ENCODE measurements at regions of chr4 and their contacts with region 1.

Region 1: DNA sequence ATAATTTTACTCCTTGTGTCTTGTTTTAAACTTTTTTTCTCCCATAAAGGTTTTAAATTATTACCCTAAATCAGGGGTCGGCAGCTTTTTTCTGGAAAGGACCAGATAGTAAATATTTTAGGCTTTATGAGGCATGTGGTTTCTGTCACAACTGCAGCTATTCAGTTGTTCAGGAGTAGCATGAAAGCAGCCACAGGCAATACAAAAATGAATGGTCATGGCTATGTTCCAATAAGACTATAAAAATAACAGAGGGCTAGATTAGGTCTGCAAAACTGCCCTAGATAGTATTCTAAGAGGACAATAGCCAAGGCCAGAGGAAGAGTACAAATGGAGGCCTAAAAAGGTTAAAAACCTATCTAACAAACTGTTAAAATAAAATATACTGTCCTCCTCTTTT is 24.6 kb downstream of the HERC5 start:
- DNase-seq: no peak
- ATAC-seq: peak; percentile 76

Region 2: DNA sequence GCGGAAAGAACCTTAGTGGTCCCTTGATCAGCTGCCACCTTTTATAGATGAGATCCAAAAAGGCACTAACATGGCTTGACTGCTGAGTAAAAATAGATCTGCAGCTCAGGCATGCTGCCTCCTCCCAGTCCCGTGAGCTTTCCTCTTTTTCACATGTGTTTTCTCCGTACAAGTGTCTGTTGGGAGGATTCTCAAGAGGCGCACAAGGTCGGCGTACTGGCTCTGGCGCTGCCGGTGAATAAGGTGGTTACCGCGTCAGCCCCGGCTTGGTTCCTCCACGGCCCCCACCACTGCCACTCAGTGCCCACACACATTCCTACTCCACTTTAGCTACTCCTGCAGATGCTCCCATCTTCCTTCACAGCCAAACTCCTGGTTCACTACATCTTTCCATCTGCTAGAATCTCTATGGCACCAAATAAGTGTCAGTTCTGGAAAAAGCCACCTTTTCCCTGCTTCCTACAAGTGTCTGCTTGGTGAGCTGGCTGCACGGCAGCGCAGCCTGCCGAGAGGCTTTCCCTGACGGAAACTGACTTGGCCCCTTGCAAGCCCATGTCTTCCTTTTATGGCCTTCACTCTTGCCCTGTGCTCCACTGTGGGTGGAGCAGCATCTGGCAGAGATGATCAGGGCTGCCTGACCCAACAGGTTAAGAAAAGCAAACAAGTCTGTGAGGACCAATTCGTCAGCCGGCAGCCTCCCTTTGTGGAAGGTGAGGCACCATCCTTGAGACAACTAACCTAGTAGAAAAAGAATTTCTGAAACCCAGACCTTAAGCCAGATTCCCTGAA is 1360.9 kb before region 1 on chr4:
- intact Hi-C with region 1: loop called (anchors 10 kb)
- DNase-seq: peak; percentile 52
- ATAC-seq: peak; percentile 86

Measured in left ventricle myocardium superior (tissue), 1 donor.